CD4-positive, alpha-beta memory T cell (primary cell): ENCODE measurements at regions of chr7 and their contacts with region 1.

Region 1: DNA sequence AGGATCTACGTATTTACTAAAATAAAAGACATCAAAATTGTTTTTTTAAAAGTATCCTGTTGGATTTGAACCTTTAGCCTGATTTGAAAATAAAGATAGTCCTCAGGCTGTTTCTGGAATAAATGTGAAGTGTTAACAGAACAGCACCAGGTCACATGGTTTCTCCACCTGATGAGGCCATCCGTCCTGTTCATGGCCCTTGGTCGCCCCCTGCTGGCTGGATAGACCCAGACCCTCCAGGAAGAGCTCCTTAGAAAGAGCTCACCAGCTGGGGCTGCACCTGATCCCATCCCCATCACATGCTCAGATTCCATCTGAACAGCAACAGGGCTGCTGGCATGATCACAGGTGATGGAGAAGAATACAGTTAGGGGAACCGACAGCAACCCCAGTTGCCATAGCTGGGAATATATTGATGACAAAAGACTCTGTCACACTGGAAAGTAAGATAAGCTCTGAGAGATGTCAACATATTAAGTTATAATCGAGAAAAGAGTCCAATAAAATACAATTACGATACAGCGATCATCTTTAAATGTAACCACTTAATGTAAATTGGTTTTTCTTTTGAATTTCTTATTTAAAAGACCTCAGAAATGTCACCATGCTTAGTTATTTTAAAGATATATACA is 4.8 kb downstream of the OR2A14 start:
- DNase-seq: peak; percentile 73 to 83 (median 76)
- H3K4me3 ChIP-seq: no peak overlapping the region
- H3K4me3 Mint-ChIP-seq: no peak overlapping the region
- H3K27ac ChIP-seq: no peak overlapping the region
- H3K27ac Mint-ChIP-seq: peak overlapping the region in 1 of 7 donors; percentile 17
- H3K4me1 ChIP-seq: no peaks in the 10 kb centered on the region
- H3K4me1 Mint-ChIP-seq: no peaks in the 10 kb centered on the region
- H3K27me3 ChIP-seq: no peaks in the 10 kb centered on the region
- H3K27me3 Mint-ChIP-seq: peaks cover 2 to 5% of the 10 kb centered on the region in 2 donors

Region 2: DNA sequence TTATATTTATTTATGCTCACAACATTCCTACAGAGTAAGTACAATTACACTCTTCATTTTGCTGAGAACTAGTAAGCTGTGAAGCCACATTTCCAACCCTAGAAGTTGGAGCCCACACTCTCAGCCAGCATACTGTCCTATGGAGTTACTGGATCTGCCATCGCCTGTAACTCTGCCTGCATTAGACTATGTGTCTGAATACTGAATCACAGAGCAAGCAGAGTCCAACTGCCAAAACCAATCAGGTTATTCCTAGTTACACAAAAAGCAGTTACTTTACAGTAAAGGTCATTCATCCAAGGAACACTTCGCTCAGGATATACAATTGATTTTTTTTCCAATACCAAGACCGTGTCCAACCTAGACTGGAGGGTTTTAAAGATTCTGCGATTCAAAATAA is 391.9 kb before region 1 on chr7:
- CTCF ChIA-PET with region 1: interaction called, 13 read pairs
- POLR2A ChIA-PET with region 1: no interaction called
- intact Hi-C with region 1: no loop called
- DNase-seq: no peak
- H3K4me3 ChIP-seq: no peak overlapping the region
- H3K4me3 Mint-ChIP-seq: no peak overlapping the region
- H3K27ac ChIP-seq: no peak overlapping the region
- H3K27ac Mint-ChIP-seq: no peak overlapping the region
- H3K4me1 ChIP-seq: no peaks in the 10 kb centered on the region
- H3K4me1 Mint-ChIP-seq: peaks cover 4 to 6% (median 5%) of the 10 kb centered on the region in 4 donors
- H3K27me3 ChIP-seq: no peaks in the 10 kb centered on the region
- H3K27me3 Mint-ChIP-seq: no peaks in the 10 kb centered on the region

Region 3: GRCh38 chr7:143901668-143902331 is 226.0 kb before region 1 on chr7 and contains the start of gene TCAF1:
- CTCF ChIA-PET with region 1: interaction called, 14 read pairs
- POLR2A ChIA-PET with region 1: interaction called, 4 read pairs
- intact Hi-C with region 1: loop called (anchors 1 kb)
- DNase-seq: peak; percentile 84 to 90 (median 86)
- H3K4me3 ChIP-seq: peak within 1 kb of the TSS; percentile 63 to 68
- H3K4me3 Mint-ChIP-seq: peak within 1 kb of the TSS; percentile 94 to 98 (median 95)
- H3K27ac ChIP-seq: peak within 1 kb of the TSS; percentile 75
- H3K27ac Mint-ChIP-seq: peak within 1 kb of the TSS; percentile 86 to 97 (median 95)
- H3K4me1 ChIP-seq: peaks cover 19% of the 10 kb centered on the region
- H3K4me1 Mint-ChIP-seq: peaks cover 22 to 38% (median 30%) of the 10 kb centered on the region in 4 donors
- H3K27me3 ChIP-seq: no peaks in the 10 kb centered on the region
- H3K27me3 Mint-ChIP-seq: peaks cover 0 to 2% of the 10 kb centered on the region in 2 donors
- total RNA-seq, gene TCAF1: 20.9 to 23.1 TPM

Region 4: DNA sequence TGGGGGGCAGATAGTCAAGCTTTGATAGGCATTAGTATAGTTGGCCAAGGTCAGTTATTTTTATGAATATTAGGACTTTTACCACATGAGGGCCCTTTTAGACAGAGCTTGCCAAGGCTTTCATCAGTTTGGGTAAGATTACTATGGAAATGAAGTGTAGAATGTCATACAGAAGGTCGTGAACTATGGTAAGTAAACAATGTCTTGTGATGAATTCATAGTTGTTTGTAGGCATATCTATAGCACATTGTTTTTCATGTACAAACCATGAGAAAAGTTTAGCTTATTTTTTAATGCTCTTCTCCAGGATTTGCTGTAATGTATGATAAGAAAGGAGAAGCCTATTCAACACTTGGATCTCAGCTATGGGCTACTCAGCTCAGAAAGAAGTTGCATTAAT is 14.2 kb before region 1 on chr7:
- CTCF ChIA-PET with region 1: interaction called, 24 read pairs
- POLR2A ChIA-PET with region 1: no interaction called
- intact Hi-C with region 1: no loop called
- DNase-seq: no peak
- H3K4me3 ChIP-seq: no peak overlapping the region
- H3K4me3 Mint-ChIP-seq: no peak overlapping the region
- H3K27ac ChIP-seq: no peak overlapping the region
- H3K27ac Mint-ChIP-seq: no peak overlapping the region
- H3K4me1 ChIP-seq: no peaks in the 10 kb centered on the region
- H3K4me1 Mint-ChIP-seq: no peaks in the 10 kb centered on the region
- H3K27me3 ChIP-seq: no peaks in the 10 kb centered on the region
- H3K27me3 Mint-ChIP-seq: peaks cover 4 to 15% of the 10 kb centered on the region in 2 donors

Region 5: DNA sequence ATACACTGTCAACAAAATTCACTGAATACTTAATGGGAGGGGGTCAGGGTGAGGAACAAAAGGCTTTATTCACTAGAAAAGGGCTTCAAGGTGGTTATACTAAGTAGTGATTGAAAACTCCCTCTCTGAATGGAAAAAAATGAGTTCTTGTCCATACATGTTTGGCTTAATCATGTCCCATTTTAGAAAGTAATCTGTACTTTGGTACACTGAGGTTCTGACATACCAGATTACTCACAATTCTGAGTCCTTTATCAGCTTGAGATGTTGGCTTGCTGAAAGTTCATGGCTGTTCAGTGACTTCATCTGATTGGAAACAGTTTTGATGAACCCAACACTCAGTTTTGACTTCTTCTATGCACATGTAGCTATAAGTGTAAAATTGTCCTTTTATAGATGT is 288.5 kb after region 1 on chr7:
- CTCF ChIA-PET with region 1: no interaction called
- POLR2A ChIA-PET with region 1: no interaction called
- intact Hi-C with region 1: no loop called
- DNase-seq: no peak
- H3K4me3 ChIP-seq: no peak overlapping the region
- H3K4me3 Mint-ChIP-seq: no peak overlapping the region
- H3K27ac ChIP-seq: no peak overlapping the region
- H3K27ac Mint-ChIP-seq: no peak overlapping the region
- H3K4me1 ChIP-seq: no peaks in the 10 kb centered on the region
- H3K4me1 Mint-ChIP-seq: no peaks in the 10 kb centered on the region
- H3K27me3 ChIP-seq: no peaks in the 10 kb centered on the region
- H3K27me3 Mint-ChIP-seq: peaks cover 6 to 8% of the 10 kb centered on the region in 2 donors